ENCODE measurements at regions of chr2 and their contacts with region 1.

Region 1: DNA sequence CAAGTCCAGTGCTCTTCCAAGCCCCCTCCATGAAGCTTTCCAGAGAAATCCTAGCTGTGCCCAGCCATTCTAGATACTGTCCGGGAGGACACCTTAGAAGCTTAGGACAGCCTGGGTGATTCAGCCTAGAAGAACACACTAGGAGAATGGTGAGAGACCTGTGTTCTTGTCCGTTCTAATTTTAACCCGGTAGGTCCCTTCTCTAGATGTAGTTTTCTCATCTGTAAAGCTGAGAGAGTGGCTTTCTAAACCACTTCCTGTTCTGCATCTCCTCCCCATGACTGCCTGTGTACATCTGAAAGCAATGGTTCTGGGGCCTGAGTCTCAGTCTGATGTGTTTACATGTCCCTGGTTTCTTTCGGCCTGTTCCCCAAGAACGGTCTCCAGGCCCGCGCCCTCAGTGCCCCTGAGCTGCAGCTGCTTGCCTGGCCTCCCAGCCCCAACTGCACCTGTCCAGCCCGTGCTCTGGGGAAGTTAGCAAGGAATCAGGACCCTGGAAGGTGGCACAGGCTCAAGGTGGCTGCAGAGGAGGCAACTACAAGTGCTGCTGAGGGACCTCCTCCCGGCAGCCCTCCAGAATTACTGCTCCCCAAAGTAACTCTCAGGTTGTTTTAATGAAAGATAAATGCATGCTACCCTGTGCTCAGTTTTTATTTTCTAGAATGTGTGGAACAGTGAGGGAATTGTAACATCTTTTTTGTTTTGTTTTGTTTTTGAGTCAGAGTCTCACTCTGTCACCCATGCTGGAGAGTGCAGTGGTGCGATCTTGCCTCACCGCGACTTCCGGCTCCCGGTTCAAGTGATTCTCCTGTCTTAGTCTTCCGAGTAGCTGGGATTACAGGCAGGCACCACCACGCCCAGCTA is 105.9 kb downstream of the LBH start:
- DNase-seq: peak; percentile 90
- H3K4me3 ChIP-seq: peak overlapping the region; percentile 48
- H3K27ac ChIP-seq: peak overlapping the region; percentile 87
- H3K4me1 ChIP-seq: peaks cover 37% of the 10 kb centered on the region
- CTCF ChIP-seq: no peak

Region 2: GRCh38 chr2:30208452-30208851 is 128.8 kb before region 1 on chr2:
- CTCF ChIA-PET with region 1: interaction called, 4 read pairs
- POLR2A ChIA-PET with region 1: interaction called, 6 read pairs
- intact Hi-C with region 1: loop called (anchors 1 kb)
- DNase-seq: peak; percentile 62
- H3K4me3 ChIP-seq: no peak overlapping the region
- H3K27ac ChIP-seq: no peak overlapping the region
- H3K4me1 ChIP-seq: peaks cover 13% of the 10 kb centered on the region
- CTCF ChIP-seq: peak; percentile 95

Region 3: GRCh38 chr2:30266051-30266621 is 71.1 kb before region 1 on chr2:
- CTCF ChIA-PET with region 1: no interaction called
- POLR2A ChIA-PET with region 1: interaction called, 7 read pairs
- intact Hi-C with region 1: loop called (anchors 2 kb)
- DNase-seq: peak; percentile 67
- H3K4me3 ChIP-seq: no peak overlapping the region
- H3K27ac ChIP-seq: no peak overlapping the region
- H3K4me1 ChIP-seq: peaks cover 22% of the 10 kb centered on the region
- CTCF ChIP-seq: no peak

Region 4: DNA sequence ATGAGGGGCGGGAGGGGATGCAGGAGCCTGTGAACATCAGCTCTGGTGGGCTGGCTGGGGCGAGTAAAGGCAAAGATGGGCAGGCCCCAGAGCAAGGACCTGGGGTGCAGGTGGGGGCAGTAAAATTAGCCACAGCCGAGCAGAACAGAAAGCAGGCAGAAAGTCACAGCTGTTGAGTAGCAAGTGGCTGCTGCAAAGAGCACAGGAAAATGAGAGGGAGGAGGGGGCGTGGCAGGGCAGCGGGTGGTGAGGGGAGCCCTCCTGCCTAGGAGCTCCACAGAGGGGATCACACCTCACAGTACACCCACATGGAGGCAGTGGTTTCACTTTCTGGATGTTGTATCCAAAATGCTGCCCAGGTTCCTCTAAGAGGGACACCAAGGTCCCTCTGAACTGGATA is 26.3 kb before region 1 on chr2:
- CTCF ChIA-PET with region 1: interaction called, 10 read pairs
- POLR2A ChIA-PET with region 1: interaction called, 31 read pairs
- intact Hi-C with region 1: loop called (anchors 1 kb)
- DNase-seq: peak; percentile 82
- H3K4me3 ChIP-seq: peak overlapping the region; percentile 10
- H3K27ac ChIP-seq: peak overlapping the region; percentile 57
- H3K4me1 ChIP-seq: peaks cover 26% of the 10 kb centered on the region
- CTCF ChIP-seq: no peak

Region 5: DNA sequence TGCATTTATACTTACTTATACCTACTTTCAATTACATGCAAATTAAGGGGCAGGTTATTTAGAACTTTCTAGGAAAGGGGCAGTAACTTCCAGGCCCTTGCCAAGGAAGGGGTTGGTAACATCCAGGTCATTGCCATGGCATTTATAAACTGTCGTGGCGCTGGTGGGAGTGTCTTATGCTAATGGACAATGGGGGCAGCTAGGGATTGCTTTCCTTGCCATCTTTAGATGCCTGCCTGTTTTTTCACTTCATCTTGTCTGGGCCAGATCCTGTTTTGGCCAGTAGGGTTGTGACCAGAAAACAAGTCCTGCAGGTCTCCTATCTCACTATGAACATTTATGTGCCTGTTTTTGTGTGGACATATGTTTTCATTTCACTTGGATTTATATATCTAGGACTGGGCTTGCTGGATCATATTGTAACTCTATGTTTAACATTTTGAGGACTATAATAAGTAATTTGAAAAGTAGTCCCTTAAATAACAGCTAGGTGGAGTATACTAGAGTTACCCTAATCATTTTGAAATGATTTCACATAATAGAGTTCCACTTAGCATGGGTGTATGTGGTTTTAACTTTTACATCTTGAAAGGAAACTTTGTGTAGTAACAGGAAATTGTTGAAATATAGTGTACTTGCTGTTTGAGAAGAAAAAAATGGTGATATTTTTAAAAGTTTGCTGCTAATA is 165.9 kb after region 1 on chr2:
- CTCF ChIA-PET with region 1: no interaction called
- POLR2A ChIA-PET with region 1: no interaction called
- intact Hi-C with region 1: no loop called
- DNase-seq: no peak
- H3K4me3 ChIP-seq: no peak overlapping the region
- H3K27ac ChIP-seq: no peak overlapping the region
- H3K4me1 ChIP-seq: peaks cover 5% of the 10 kb centered on the region
- CTCF ChIP-seq: peak; percentile 59

Region 6: DNA sequence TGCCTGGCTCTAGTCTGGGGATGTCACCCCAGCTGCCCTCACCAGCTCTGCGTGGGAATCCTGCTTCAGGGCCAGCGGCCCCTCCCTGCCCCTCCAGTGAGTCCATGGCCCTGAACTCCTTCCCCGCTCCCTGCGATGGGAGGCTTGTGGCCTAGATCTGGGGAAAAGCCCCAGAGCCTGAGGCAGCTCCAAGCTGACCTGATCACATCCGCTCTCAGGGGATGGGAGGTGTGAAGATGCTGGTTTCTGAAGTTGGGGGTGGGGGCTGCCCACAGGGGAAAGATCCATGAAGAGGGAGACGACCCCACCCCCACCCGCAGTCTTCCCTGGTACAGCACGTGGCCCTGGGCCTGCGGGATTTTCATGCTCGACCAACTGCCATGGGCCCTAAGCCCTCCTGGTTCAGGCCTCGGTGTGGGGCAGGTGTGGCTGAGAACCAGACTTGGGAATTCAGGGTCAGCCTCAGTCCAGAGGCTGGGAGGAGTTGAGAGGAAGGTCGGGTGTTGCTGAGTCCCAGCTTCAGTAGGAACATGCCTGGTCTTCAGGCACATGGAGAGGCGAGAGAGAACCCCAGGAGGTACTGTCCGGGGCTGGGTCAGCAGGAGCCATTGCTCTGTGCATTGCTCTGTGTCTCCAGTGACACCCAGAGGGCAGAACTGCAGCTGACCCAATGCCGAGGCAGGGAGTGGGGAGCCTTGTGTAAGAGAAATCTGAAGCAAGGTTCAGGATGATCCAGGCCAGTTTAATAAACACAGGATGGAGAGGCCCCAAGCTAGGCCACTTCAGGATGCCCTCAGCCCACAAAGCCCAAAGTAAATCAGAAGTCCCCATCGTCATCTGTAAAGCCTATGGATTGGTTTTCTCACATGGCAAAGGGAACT is 355.0 kb after region 1 on chr2:
- CTCF ChIA-PET with region 1: no interaction called
- POLR2A ChIA-PET with region 1: no interaction called
- intact Hi-C with region 1: loop called (anchors 5 kb)
- DNase-seq: no peak
- H3K4me3 ChIP-seq: no peak overlapping the region
- H3K27ac ChIP-seq: no peak overlapping the region
- H3K4me1 ChIP-seq: no peaks in the 10 kb centered on the region
- CTCF ChIP-seq: no peak